ENCODE measurements at regions of chr6 and their contacts with region 1.

Region 1: GRCh38 chr6:85678602-85679444 is 36.1 kb upstream of the SYNCRIP start:
- DNase-seq: peak; percentile 98
- H3K4me3 Mint-ChIP-seq: peak overlapping the region; percentile 91
- H3K27ac Mint-ChIP-seq: peak overlapping the region; percentile 97
- H3K4me1 Mint-ChIP-seq: peaks cover 51% of the 10 kb centered on the region
- H3K27me3 Mint-ChIP-seq: peaks cover 4% of the 10 kb centered on the region

Region 2: GRCh38 chr6:85642774-85643536 is 35.9 kb before region 1 on chr6 and contains the start of gene SYNCRIP:
- CTCF ChIA-PET with region 1: interaction called, 21 read pairs
- DNase-seq: peak; percentile 98
- H3K4me3 Mint-ChIP-seq: peak within 1 kb of the TSS; percentile 89
- H3K27ac Mint-ChIP-seq: peak within 1 kb of the TSS; percentile 100
- H3K4me1 Mint-ChIP-seq: peaks cover 46% of the 10 kb centered on the region
- H3K27me3 Mint-ChIP-seq: peaks cover 9% of the 10 kb centered on the region

Region 3: GRCh38 chr6:85772641-85773040 is 93.8 kb after region 1 on chr6:
- CTCF ChIA-PET with region 1: no interaction called
- DNase-seq: no peak
- H3K4me3 Mint-ChIP-seq: no peak overlapping the region
- H3K27ac Mint-ChIP-seq: no peak overlapping the region
- H3K4me1 Mint-ChIP-seq: no peaks in the 10 kb centered on the region
- H3K27me3 Mint-ChIP-seq: no peaks in the 10 kb centered on the region

Region 4: DNA sequence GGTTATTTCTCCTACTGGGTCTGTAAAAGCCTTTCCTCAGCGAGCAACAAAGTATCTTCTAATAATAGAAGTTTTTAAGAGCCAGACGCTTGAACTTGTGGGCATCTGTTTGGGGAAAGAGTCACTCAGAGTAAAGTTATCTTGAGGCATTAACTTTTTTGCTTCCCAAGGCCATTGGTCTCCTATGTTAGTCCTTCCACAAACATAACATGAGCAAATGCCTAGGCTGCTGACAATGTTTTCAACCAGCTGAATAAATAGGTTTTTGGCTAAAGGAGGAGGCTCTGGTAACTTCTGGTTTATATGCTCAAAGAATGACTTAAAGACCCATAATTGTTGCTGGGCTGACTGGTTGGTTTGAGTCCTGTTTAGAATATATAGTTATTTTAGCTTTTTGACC is 177.4 kb after region 1 on chr6:
- CTCF ChIA-PET with region 1: no interaction called
- DNase-seq: no peak
- H3K4me3 Mint-ChIP-seq: no peak overlapping the region
- H3K27ac Mint-ChIP-seq: no peak overlapping the region
- H3K4me1 Mint-ChIP-seq: no peaks in the 10 kb centered on the region
- H3K27me3 Mint-ChIP-seq: no peaks in the 10 kb centered on the region

Measured in activated naive CD4-positive, alpha-beta T cell treated with anti-CD3 and anti-CD28 coated beads, Interleukin-2, amount 10 ng/mL, durations not matched to agents 7 days and 5 days (primary cell).